Activated CD4-positive, alpha-beta memory T cell treated with anti-CD3 and anti-CD28 coated beads, Interleukin-2, amount 10 ng/mL, durations not matched to agents 7 days and 5 days (primary cell): ENCODE measurements at regions of chr2 and their contacts with region 1.

Region 1: DNA sequence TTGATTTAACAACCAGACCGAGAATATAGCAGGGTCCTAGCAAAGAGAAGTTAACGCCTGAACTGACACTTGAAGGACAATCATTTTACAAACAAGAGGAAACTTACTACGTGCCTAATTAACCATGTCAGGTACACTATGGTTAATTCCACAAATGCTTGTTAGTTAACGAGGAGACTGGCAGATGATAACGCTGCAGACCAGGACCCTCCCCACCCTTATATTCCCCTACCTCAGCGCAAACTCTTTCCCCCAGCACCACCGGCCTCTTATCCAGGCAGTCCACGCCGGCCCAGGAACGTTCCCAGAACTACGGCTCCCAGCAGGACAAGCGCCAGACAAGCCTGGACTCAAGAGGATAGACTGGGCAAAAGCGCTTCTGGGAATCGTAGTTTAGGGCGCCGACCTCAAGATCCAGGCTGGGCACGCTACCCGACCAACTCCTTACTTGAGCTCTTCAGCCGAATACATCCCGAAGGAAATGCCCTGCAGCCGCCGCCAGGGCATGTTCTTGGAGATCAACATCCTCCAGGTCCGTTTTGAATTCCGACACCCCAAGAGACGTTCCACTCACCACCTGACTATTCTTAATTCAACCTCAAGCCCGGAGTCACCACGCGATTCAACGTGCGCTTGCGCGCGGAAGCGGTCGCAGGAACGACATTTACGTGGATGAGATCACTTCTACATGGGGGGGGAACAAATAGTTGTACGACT is at the start of gene POLR1A:
- DNase-seq: peak; percentile 89
- H3K4me3 Mint-ChIP-seq: peak within 1 kb of the TSS; percentile 80
- H3K27ac Mint-ChIP-seq: peak within 1 kb of the TSS; percentile 92
- H3K4me1 Mint-ChIP-seq: peaks cover 58% of the 10 kb centered on the region
- H3K27me3 Mint-ChIP-seq: no peaks in the 10 kb centered on the region
- total RNA-seq, gene POLR1A: 25.2 to 29.7 TPM

Region 2: DNA sequence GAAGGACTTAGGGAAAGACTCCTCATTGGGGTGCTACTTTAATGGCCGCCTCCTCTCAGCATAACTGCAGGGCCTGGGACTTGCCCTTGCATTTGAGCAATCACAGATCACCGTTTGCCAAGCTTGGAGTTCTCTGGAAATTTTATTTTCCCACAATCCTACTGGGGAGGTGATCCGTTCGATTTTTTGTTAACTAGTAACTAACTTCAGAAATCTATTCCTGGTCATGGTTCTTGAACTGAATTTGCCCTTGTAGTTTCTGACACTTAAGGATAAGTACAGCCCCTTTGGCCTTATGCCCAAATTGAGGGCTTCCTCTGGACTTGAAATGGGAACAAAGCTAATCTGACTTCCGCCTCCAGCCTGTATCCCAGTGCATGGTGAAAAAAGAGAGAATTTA is 156.1 kb before region 1 on chr2:
- CTCF ChIA-PET with region 1: no interaction called
- POLR2A ChIA-PET with region 1: no interaction called
- DNase-seq: no peak
- H3K4me3 Mint-ChIP-seq: no peak overlapping the region
- H3K27ac Mint-ChIP-seq: no peak overlapping the region
- H3K4me1 Mint-ChIP-seq: peaks cover 3% of the 10 kb centered on the region
- H3K27me3 Mint-ChIP-seq: peaks cover 16% of the 10 kb centered on the region

Region 3: DNA sequence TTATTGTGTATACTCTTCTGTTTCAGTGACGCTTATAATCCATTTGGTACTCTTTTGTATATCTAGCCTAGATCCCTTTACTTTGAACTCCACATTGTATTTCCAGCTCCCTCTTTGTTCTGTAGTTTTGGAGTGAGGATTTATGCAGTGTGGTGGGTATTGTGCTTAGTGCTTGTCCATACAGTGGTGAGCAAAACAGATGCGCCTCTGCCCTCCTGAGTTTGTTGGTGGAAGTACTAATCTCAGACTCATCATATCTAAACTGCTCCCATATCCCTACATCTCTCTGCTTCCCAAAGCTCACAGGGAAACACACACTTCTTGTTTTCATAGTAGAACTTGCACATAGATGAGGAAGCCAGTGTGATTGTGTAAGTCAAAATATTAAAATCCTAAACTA is 12.7 kb after region 1 on chr2:
- CTCF ChIA-PET with region 1: interaction called, 4 read pairs
- POLR2A ChIA-PET with region 1: interaction called, 10 read pairs
- DNase-seq: no peak
- H3K4me3 Mint-ChIP-seq: no peak overlapping the region
- H3K27ac Mint-ChIP-seq: no peak overlapping the region
- H3K4me1 Mint-ChIP-seq: no peaks in the 10 kb centered on the region
- H3K27me3 Mint-ChIP-seq: no peaks in the 10 kb centered on the region

Region 4: DNA sequence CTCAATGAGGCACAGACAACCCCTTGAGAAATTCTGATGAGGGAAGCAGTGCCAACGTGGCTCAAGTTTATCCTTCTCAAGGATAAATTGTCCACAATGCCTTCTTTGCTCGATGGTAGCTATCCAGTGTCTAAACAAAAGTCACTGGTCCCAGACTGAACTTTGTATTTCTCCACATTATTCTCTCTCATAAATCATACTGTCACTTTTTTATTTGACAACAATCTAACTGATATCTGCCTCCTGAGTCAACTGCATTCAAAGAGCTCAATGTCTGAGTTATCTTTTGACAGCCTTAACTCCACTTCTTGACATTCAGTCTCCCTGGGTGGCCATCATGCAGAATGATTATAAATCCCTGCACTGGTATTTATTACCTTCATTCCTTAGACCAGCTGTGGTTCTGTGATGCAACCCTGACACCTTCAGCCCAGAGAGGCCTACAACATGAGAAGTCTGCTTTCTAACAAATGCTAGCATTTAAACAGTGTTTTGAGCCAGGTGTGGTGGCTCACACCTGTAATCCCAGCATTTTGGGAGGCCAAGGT is 51.7 kb after region 1 on chr2:
- CTCF ChIA-PET with region 1: no interaction called
- POLR2A ChIA-PET with region 1: no interaction called
- DNase-seq: no peak
- H3K4me3 Mint-ChIP-seq: no peak overlapping the region
- H3K27ac Mint-ChIP-seq: no peak overlapping the region
- H3K4me1 Mint-ChIP-seq: no peaks in the 10 kb centered on the region
- H3K27me3 Mint-ChIP-seq: no peaks in the 10 kb centered on the region

Region 5: GRCh38 chr2:86195055-86195807 is 89.8 kb after region 1 on chr2 and contains the start of gene IMMT:
- CTCF ChIA-PET with region 1: interaction called, 5 read pairs
- POLR2A ChIA-PET with region 1: interaction called, 16 read pairs
- DNase-seq: peak; percentile 94
- H3K4me3 Mint-ChIP-seq: peak within 1 kb of the TSS; percentile 94
- H3K27ac Mint-ChIP-seq: peak within 1 kb of the TSS; percentile 90
- H3K4me1 Mint-ChIP-seq: peaks cover 58% of the 10 kb centered on the region
- H3K27me3 Mint-ChIP-seq: no peaks in the 10 kb centered on the region
- total RNA-seq, gene IMMT: 144 to 147 TPM

Region 6: DNA sequence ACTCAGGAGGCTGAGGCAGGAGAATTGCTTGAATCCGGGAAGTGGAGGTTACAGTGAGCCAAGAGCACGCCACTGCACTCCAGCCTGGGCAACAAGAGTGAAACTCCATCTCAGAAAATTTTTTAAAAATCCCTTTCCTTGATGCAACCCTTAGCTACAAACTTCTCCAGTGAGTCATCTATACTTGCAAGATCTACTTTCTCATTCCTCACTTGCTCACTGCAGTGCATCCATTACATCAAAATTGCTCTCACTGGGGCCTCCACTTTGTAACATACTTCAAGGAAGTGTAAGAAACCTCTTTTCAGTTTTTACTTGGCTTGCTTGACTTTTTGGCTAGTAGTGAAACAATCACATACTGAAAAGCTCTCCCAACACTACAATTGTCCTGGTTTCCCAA is 166.7 kb after region 1 on chr2:
- CTCF ChIA-PET with region 1: no interaction called
- POLR2A ChIA-PET with region 1: no interaction called
- DNase-seq: no peak
- H3K4me3 Mint-ChIP-seq: no peak overlapping the region
- H3K27ac Mint-ChIP-seq: no peak overlapping the region
- H3K4me1 Mint-ChIP-seq: peaks cover 17% of the 10 kb centered on the region
- H3K27me3 Mint-ChIP-seq: peaks cover 22% of the 10 kb centered on the region